Activated T-helper 1 cell treated with anti-CD3 and anti-CD28 coated beads, Interleukin-12 subunit alpha, Interleukin-12 subunit beta, Interleukin-2, Interleukin-4 antibody, amounts not matched to agents 30 ng/mL and 10 ng/mL and 1 ng/mL, durations not matched to agents 14 hours and 24 hours and 36 hours (primary cell): ENCODE measurements at regions of chr17 and their contacts with region 1.

Region 1: GRCh38 chr17:19648475-19649406 is at the start of gene ALDH3A2:
- DNase-seq: peak; percentile 93
- H3K4me3 Mint-ChIP-seq: peak within 1 kb of the TSS; percentile 92
- H3K27ac Mint-ChIP-seq: peak within 1 kb of the TSS; percentile 95
- H3K4me1 Mint-ChIP-seq: peaks cover 46% of the 10 kb centered on the region
- H3K27me3 Mint-ChIP-seq: peaks cover 13% of the 10 kb centered on the region
- total RNA-seq, gene ALDH3A2: 36.5 and 38.1 TPM in 2 replicates

Region 2: DNA sequence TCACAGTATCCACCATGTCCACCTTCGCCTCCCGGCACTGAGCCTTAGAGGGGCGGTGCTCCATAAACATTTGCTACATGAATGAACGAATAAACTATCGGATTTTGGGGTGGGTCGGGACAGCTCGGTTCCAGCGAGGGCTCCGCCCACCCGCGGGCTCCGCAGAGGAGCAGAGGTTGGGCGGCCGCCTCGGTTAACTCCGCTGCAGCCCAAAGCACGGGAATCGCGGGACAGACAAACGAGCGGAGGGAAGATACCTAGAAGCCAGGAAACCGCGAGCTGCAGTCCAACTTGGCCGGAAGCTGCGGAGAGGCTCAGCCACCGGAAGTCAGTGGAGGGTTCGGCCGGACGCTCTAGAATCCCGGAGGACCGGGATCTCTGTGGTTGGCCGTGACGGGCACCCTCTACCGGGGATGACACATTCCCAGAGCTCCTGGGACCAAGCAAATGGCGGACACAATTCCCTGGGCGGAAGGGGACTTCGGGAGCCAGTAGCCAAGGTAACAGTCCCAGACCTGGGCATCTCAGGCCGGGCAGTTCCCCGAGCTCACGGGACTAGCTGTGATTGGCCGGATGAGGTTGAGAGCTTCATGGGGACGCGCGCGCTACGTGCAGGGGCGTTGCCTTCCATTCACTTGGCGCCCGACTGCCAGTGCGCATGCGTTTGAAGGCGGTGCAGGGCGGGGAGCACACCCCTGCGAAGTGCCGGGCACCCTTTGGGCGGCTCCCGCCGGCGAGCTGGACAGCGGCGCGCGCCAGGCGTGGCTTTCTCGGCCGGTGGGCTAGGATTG is 270.9 kb before region 1 on chr17:
- intact Hi-C with region 1: loop called (anchors 2 kb)
- DNase-seq: peak; percentile 98
- H3K4me3 Mint-ChIP-seq: peak overlapping the region; percentile 98
- H3K27ac Mint-ChIP-seq: peak overlapping the region; percentile 99
- H3K4me1 Mint-ChIP-seq: peaks cover 36% of the 10 kb centered on the region
- H3K27me3 Mint-ChIP-seq: no peaks in the 10 kb centered on the region

Region 3: GRCh38 chr17:19513897-19514488 is 134.7 kb before region 1 on chr17:
- intact Hi-C with region 1: loop called (anchors 1 kb)
- DNase-seq: peak; percentile 46
- H3K4me3 Mint-ChIP-seq: no peak overlapping the region
- H3K27ac Mint-ChIP-seq: no peak overlapping the region
- H3K4me1 Mint-ChIP-seq: peaks cover 5% of the 10 kb centered on the region
- H3K27me3 Mint-ChIP-seq: peaks cover 7% of the 10 kb centered on the region

Region 4: GRCh38 chr17:19977311-19978208 is 328.8 kb after region 1 on chr17 and contains the start of gene AKAP10:
- intact Hi-C with region 1: loop called (anchors 5 kb)
- DNase-seq: peak; percentile 88
- H3K4me3 Mint-ChIP-seq: peak within 1 kb of the TSS; percentile 91
- H3K27ac Mint-ChIP-seq: peak within 1 kb of the TSS; percentile 94
- H3K4me1 Mint-ChIP-seq: peaks cover 42% of the 10 kb centered on the region
- H3K27me3 Mint-ChIP-seq: no peaks in the 10 kb centered on the region
- total RNA-seq, gene AKAP10: 38.8 and 39.3 TPM in 2 replicates